ENCODE measurements at regions of chr9 and their contacts with region 1.

Region 1: GRCh38 chr9:6055213-6055612 is 39.8 kb upstream of the RANBP6 start:
- DNase-seq: peak; percentile 58
- ATAC-seq: peak; percentile 84
- H3K4me3 ChIP-seq: no peak overlapping the region
- H3K27ac ChIP-seq: no peak overlapping the region
- H3K4me1 ChIP-seq: peaks cover 19% of the 10 kb centered on the region
- H3K27me3 ChIP-seq: no peaks in the 10 kb centered on the region
- CTCF ChIP-seq: peak; percentile 51 to 79 (median 64); a peak in 5 of 6 replicates
- EP300 ChIP-seq: no peak
- POLR2A ChIP-seq: no peak
- RAD21 ChIP-seq: peak; percentile 96

Region 2: DNA sequence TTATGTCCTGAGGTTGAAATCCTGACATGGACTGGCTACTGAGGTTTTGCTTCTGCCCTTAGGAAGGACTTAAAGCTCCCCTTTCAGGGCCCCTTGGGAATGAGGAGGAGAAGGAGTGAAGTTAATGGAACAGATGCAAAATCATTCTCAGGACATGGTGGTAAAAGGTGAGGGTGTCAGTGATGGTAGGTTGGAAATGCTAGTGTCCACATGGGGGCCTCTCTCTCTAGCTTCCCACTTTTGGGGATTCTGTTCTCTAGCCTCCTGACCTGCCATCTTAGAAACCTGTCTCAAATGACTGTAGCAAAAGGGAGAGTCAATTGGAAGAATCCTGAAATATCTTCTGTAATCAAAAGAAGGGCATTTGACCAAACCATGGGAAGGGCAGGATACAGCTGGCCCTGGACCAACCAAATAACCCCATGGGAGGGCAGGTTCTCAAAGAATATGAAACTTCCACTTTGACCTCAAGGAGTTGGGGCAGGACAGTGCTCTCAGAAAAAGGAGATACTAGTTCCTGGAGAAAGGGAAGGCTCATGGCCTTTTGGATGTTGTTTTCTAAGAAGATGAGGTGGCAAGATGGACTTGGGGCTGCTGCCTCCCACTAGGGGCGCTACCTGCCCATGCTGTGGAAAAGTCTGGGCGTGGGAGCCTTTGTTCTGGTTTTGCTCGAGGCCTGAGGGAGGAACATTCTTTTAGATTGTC is 185.7 kb before region 1 on chr9:
- CTCF ChIA-PET with region 1: interaction called, 7 read pairs
- POLR2A ChIA-PET with region 1: no interaction called
- RAD21 ChIA-PET with region 1: interaction called, 7 read pairs
- SMC1A ChIA-PET with region 1: interaction called, 10 read pairs
- in situ Hi-C with region 1: no loop called
- intact Hi-C with region 1: no loop called
- DNase-seq: no peak
- ATAC-seq: peak; percentile 69
- H3K4me3 ChIP-seq: no peak overlapping the region
- H3K27ac ChIP-seq: no peak overlapping the region
- H3K4me1 ChIP-seq: no peaks in the 10 kb centered on the region
- H3K27me3 ChIP-seq: no peaks in the 10 kb centered on the region
- CTCF ChIP-seq: peak in 2 of 3 experiments; percentile 57 to 65; a peak in 5 of 6 replicates
- EP300 ChIP-seq: no peak
- POLR2A ChIP-seq: no peak
- RAD21 ChIP-seq: peak; percentile 48

Region 3: DNA sequence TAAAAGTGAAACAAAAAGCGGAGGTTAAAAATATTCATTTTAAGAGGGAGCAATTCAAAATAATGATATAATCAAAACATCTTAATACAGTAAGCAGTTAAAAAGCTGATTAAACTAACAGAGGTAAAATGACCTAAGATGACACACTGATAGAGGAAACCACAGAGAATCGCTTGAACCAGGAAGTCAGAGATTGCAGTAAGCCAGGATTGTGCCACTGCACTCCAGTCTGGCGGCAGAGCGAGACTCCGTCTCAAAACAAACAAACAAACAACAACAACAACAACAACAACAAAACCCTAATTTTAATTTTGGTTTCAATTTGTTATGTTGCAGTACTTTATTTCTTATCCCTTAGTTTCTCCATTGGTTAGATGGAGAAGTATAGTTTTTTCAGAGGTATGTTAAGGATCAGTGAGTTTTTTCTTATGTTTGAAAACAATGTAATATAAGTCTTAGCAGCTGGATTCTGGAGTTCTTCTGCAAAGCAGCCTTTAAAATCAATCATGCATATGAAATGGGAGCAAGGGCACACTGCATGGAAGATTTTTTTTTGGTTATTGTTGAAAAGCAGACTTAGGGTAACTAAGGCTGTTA is 106.0 kb before region 1 on chr9:
- CTCF ChIA-PET with region 1: interaction called, 12 read pairs
- POLR2A ChIA-PET with region 1: no interaction called
- RAD21 ChIA-PET with region 1: interaction called, 6 read pairs
- SMC1A ChIA-PET with region 1: interaction called, 8 read pairs
- in situ Hi-C with region 1: no loop called
- intact Hi-C with region 1: no loop called
- DNase-seq: peak; percentile 15
- ATAC-seq: peak; percentile 79
- H3K4me3 ChIP-seq: peak overlapping the region; percentile 26; the same call in 1 of the 2 replicates
- H3K27ac ChIP-seq: peak overlapping the region; percentile 43
- H3K4me1 ChIP-seq: 0 out of 2 replicates have a peak, but pooled peaks cover 3% of the 10 kb centered on the region
- H3K27me3 ChIP-seq: no peaks in the 10 kb centered on the region
- CTCF ChIP-seq: no peak
- EP300 ChIP-seq: no peak
- POLR2A ChIP-seq: no peak
- RAD21 ChIP-seq: no peak

Region 4: GRCh38 chr9:5999443-6000101 is 55.6 kb before region 1 on chr9:
- CTCF ChIA-PET with region 1: interaction called, 12 read pairs
- POLR2A ChIA-PET with region 1: interaction called, 3 read pairs
- RAD21 ChIA-PET with region 1: interaction called, 10 read pairs
- SMC1A ChIA-PET with region 1: interaction called, 13 read pairs
- in situ Hi-C with region 1: no loop called
- intact Hi-C with region 1: no loop called
- DNase-seq: no peak
- ATAC-seq: peak; percentile 56
- H3K4me3 ChIP-seq: no peak overlapping the region
- H3K27ac ChIP-seq: no peak overlapping the region
- H3K4me1 ChIP-seq: no peaks in the 10 kb centered on the region; the same call in 1 of the 2 replicates
- H3K27me3 ChIP-seq: no peaks in the 10 kb centered on the region
- CTCF ChIP-seq: no peak
- EP300 ChIP-seq: no peak
- POLR2A ChIP-seq: no peak
- RAD21 ChIP-seq: no peak

Region 5: GRCh38 chr9:6024020-6024554 is 31.1 kb before region 1 on chr9:
- CTCF ChIA-PET with region 1: interaction called, 33 read pairs
- POLR2A ChIA-PET with region 1: interaction called, 3 read pairs
- RAD21 ChIA-PET with region 1: interaction called, 11 read pairs
- SMC1A ChIA-PET with region 1: interaction called, 3 read pairs
- in situ Hi-C with region 1: no loop called
- intact Hi-C with region 1: no loop called
- DNase-seq: no peak
- ATAC-seq: peak; percentile 99
- H3K4me3 ChIP-seq: no peak overlapping the region
- H3K27ac ChIP-seq: no peak overlapping the region
- H3K4me1 ChIP-seq: no peaks in the 10 kb centered on the region
- H3K27me3 ChIP-seq: no peaks in the 10 kb centered on the region; a peak in 1 of 4 replicates
- CTCF ChIP-seq: peak; percentile 28 to 69 (median 61); a peak in 5 of 6 replicates
- EP300 ChIP-seq: no peak
- POLR2A ChIP-seq: no peak
- RAD21 ChIP-seq: no peak

Region 6: DNA sequence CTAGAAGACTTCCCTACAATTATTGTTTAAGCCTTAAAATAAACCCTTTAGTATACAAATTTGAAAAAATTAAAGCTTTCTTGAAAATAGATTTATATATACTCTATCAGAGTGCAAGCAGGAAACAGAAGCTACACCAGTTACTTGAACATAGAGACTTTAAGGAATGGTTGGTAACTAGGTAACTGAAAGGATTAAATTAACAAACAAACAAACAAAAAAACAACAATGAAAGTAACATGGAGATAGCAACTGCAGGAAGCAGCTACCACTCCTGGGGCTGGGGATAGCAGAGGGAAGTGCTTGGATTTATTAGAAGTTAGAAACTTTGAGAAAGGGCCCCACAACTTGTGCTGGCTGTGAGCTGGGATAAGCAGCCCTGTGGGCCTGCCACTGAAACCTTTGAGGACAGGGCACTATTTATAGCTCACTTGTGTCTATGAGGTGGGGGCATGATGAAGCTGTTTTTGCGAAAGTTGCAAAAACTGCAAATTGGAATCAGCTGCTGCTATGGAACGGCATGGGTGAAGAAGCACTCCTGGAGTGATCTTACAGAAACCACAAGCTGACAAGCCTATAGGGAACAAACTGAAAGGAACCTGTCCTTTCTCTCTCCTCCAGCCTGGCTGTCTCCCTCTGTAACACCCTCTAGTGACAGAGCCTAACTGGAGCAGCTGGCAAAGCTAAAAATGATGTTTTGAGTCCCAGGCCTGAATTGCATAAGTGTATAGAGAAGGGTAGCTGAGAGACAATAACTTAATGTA is 51.5 kb after region 1 on chr9:
- CTCF ChIA-PET with region 1: interaction called, 19 read pairs
- POLR2A ChIA-PET with region 1: no interaction called
- RAD21 ChIA-PET with region 1: no interaction called
- SMC1A ChIA-PET with region 1: interaction called, 11 read pairs
- in situ Hi-C with region 1: no loop called
- intact Hi-C with region 1: no loop called
- DNase-seq: peak; percentile 41
- ATAC-seq: peak; percentile 92
- H3K4me3 ChIP-seq: no peak overlapping the region
- H3K27ac ChIP-seq: no peak overlapping the region
- H3K4me1 ChIP-seq: no peaks in the 10 kb centered on the region
- H3K27me3 ChIP-seq: no peaks in the 10 kb centered on the region
- CTCF ChIP-seq: peak; percentile 21 to 38 (median 26); a peak in 3 of 6 replicates
- EP300 ChIP-seq: no peak
- POLR2A ChIP-seq: no peak
- RAD21 ChIP-seq: peak; percentile 41

Region 7: DNA sequence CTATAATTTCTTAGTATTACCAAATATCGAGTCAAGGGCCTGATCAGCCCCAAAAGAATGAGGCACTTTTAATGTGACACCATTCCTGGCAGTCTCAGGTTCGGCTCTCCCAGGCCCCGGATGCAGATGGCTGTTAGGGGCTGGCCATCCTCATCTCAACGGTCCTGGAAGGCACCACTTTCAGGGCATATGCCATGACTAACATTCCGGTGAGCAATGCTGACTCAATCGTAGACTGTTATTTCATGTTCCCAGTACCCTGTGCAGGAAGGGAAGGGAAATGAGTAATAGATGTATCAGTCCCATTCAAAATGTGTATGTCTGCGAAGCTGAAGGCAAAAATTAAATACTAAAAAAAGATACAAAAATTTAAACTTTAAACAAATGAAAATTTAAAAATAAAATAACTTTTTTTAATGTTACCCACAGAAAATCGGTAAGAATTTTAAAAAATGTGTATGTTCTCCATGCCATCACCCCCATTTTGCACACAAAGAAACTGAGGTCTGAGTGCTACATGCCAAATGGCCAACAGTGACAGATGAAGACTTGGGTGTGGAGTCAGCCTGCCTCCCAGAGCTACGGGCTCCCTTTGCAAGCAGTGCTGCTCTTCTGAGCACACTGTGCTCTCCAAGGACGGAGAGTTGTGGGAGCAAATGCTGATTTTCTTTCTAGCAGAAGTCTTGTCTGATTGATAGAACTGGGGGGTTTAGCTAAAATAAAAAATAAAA is 511.4 kb after region 1 on chr9:
- CTCF ChIA-PET with region 1: interaction called, 8 read pairs
- POLR2A ChIA-PET with region 1: no interaction called
- RAD21 ChIA-PET with region 1: interaction called, 3 read pairs
- SMC1A ChIA-PET with region 1: interaction called, 4 read pairs
- in situ Hi-C with region 1: no loop called
- intact Hi-C with region 1: loop called (anchors 10 kb)
- DNase-seq: no peak
- ATAC-seq: peak; percentile 59
- H3K4me3 ChIP-seq: no peak overlapping the region
- H3K27ac ChIP-seq: no peak overlapping the region
- H3K4me1 ChIP-seq: no peaks in the 10 kb centered on the region
- H3K27me3 ChIP-seq: no peaks in the 10 kb centered on the region
- CTCF ChIP-seq: no peak
- EP300 ChIP-seq: no peak
- POLR2A ChIP-seq: no peak
- RAD21 ChIP-seq: no peak

Measured in GM12878 (cell line).